Activated CD4-positive, alpha-beta T cell treated with anti-CD3 and anti-CD28 coated beads, Interleukin-2, amount 10 ng/mL, durations not matched to agents 7 days and 5 days (primary cell): ENCODE measurements at regions of chr1 and their contacts with region 1.

Region 1: DNA sequence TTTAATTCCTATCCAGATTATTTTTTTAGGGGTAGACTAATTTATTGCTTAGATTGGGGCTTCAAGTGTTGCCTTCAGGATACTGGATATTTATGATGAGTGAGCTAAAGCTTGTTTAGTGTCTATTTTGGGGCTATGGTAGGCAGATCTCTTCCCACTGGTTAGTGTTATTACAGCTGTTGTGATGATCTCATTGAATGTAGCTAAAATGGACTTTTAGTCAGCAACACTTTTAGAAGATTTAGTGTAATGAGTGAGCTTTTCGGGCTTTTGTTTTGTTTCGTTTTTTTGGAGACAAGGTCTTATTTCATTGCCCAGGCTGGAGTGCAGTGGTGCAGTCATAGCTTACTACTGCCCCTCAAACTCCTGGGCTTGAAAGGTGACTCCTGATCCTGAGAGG is 14.2 kb downstream of the THRAP3 start:
- DNase-seq: no peak
- H3K4me3 Mint-ChIP-seq: no peak overlapping the region
- H3K27ac Mint-ChIP-seq: no peak overlapping the region
- H3K4me1 Mint-ChIP-seq: peaks cover 25% of the 10 kb centered on the region
- H3K27me3 Mint-ChIP-seq: no peaks in the 10 kb centered on the region

Region 2: DNA sequence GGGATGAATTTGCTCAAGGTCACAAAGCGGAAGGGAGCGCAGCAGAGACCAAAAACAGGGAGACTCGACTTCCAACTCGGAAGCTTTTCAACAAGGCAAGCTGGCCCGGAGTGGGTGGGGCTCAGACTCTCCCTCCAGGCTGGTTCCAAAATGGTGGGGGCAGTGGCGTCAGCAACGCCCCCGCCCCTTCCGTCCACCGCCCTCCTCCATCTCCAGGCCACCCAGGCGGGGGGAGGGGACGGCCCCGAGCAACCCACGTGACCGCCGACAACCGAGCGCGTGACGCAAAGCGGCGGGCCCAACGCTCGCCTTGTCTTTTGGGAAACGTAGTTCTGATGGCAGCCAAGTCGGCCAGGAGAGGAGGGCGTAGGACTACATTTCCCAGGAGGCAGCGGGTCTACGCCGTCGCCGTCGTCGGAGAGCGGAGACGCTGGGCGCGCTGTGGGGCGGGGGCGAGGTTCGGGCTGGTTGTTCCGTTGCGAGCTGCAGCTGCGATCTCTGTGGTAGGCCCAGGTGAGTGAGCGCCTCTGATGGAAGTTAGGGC is 14.4 kb before region 1 on chr1 and contains the start of gene THRAP3:
- CTCF ChIA-PET with region 1: interaction called, 7 read pairs
- POLR2A ChIA-PET with region 1: interaction called, 10 read pairs
- DNase-seq: peak; percentile 99
- H3K4me3 Mint-ChIP-seq: peak within 1 kb of the TSS; percentile 87
- H3K27ac Mint-ChIP-seq: peak within 1 kb of the TSS; percentile 99
- H3K4me1 Mint-ChIP-seq: peaks cover 25% of the 10 kb centered on the region
- H3K27me3 Mint-ChIP-seq: no peaks in the 10 kb centered on the region
- total RNA-seq, gene THRAP3: 142 to 167 TPM